Caco-2 (cell line): ENCODE measurements at regions of chr6 and their contacts with region 1.

Region 1: GRCh38 chr6:122839477-122839876 is 50.4 kb downstream of the SMPDL3A start:
- DNase-seq: peak; percentile 61 to 81
- H3K4me3 ChIP-seq: no peak overlapping the region
- H3K4me3 Mint-ChIP-seq: no peak overlapping the region
- H3K27ac Mint-ChIP-seq: no peak overlapping the region
- H3K4me1 ChIP-seq: peaks cover 9% of the 10 kb centered on the region
- H3K4me1 Mint-ChIP-seq: peaks cover 10% of the 10 kb centered on the region
- H3K27me3 ChIP-seq: no peaks in the 10 kb centered on the region
- H3K27me3 Mint-ChIP-seq: no peaks in the 10 kb centered on the region
- CTCF ChIP-seq: peak; percentile 58 to 68

Region 2: DNA sequence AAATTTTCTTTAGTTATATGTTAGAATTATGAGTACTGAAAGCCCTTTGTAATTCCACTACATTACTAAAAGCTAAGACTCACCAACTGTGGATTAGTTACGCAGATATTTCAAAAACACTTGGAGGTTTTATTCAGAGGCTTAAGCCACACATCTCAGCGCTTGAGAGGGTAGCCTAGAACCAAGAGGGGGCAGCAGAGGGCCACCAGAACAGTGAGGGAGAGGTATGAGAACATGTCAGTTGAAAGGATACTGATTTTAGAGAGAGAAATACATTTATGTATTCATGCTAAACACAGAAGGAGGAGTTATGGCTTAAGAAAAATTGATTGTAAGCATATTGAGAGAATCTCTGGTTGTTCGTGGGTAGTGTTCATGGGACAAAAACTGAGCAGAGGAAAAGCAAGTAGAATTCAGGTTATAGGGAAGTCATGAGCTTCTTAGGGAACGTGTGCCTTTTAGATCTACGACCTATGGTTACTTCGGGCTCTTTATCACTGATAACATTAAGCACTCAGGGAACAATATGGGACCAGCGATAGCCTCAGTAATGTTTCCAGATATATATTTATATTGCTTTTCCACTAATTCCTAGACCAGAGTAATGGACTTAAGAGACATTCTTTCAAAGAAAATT is 347.4 kb before region 1 on chr6:
- CTCF ChIA-PET with region 1: interaction called, 4 read pairs
- POLR2A ChIA-PET with region 1: no interaction called
- intact Hi-C with region 1: loop called (anchors 2 kb)
- DNase-seq: peak; percentile 63 to 76
- H3K4me3 ChIP-seq: no peak overlapping the region
- H3K4me3 Mint-ChIP-seq: no peak overlapping the region
- H3K27ac Mint-ChIP-seq: no peak overlapping the region
- H3K4me1 ChIP-seq: no peaks in the 10 kb centered on the region
- H3K4me1 Mint-ChIP-seq: peaks cover 6% of the 10 kb centered on the region
- H3K27me3 ChIP-seq: no peaks in the 10 kb centered on the region
- H3K27me3 Mint-ChIP-seq: peaks cover 2% of the 10 kb centered on the region
- CTCF ChIP-seq: peak; percentile 77 to 88

Region 3: GRCh38 chr6:122749451-122750050 is 89.9 kb before region 1 on chr6:
- CTCF ChIA-PET with region 1: interaction called, 47 read pairs
- POLR2A ChIA-PET with region 1: no interaction called
- intact Hi-C with region 1: loop called (anchors 1 kb)
- DNase-seq: no peak
- H3K4me3 ChIP-seq: no peak overlapping the region
- H3K4me3 Mint-ChIP-seq: no peak overlapping the region
- H3K27ac Mint-ChIP-seq: no peak overlapping the region
- H3K4me1 ChIP-seq: peaks cover 16% of the 10 kb centered on the region
- H3K4me1 Mint-ChIP-seq: peaks cover 9% of the 10 kb centered on the region
- H3K27me3 ChIP-seq: no peaks in the 10 kb centered on the region
- H3K27me3 Mint-ChIP-seq: no peaks in the 10 kb centered on the region
- CTCF ChIP-seq: no peak

Region 4: GRCh38 chr6:122770835-122771601 is 68.5 kb before region 1 on chr6:
- CTCF ChIA-PET with region 1: interaction called, 39 read pairs
- POLR2A ChIA-PET with region 1: no interaction called
- intact Hi-C with region 1: loop called (anchors 1 kb)
- DNase-seq: peak; percentile 50 to 59
- H3K4me3 ChIP-seq: no peak overlapping the region
- H3K4me3 Mint-ChIP-seq: peak overlapping the region; percentile 42
- H3K27ac Mint-ChIP-seq: peak overlapping the region; percentile 66
- H3K4me1 ChIP-seq: peaks cover 52% of the 10 kb centered on the region
- H3K4me1 Mint-ChIP-seq: peaks cover 40% of the 10 kb centered on the region
- H3K27me3 ChIP-seq: no peaks in the 10 kb centered on the region
- H3K27me3 Mint-ChIP-seq: no peaks in the 10 kb centered on the region
- CTCF ChIP-seq: peak; percentile 24 to 49